ENCODE measurements at regions of chr1 and their contacts with region 1.

Region 1: DNA sequence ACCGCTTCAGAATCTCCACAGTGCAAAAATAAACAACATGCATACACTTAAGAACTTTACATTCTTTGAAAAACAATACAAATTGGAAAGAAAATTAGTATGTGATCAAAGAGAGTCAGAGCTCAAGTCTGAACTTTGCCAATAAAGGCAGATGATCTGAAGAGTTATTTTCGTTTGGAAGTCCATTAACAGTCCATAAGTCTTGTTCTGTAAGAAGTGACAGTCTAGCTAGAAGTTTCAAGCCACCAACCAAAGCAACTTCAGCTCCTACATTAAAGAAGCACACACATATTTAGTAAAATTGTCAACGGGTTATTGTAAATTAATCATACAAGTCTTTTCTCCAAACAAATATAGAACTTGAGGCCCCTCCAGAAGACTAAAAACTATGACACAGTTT is 20.7 kb downstream of the ANGEL2 start:
- DNase-seq: no peak
- ATAC-seq: no peak
- H3K4me3 ChIP-seq: no peak overlapping the region
- H3K27ac ChIP-seq: no peak overlapping the region
- H3K4me1 ChIP-seq: no peaks in the 10 kb centered on the region
- H3K27me3 ChIP-seq: no peaks in the 10 kb centered on the region
- CTCF ChIP-seq: no peak

Region 2: GRCh38 chr1:211734791-211735190 is 1260.1 kb before region 1 on chr1:
- intact Hi-C with region 1: no loop called
- DNase-seq: no peak
- ATAC-seq: no peak
- H3K4me3 ChIP-seq: no peak overlapping the region
- H3K27ac ChIP-seq: no peak overlapping the region
- H3K4me1 ChIP-seq: no peaks in the 10 kb centered on the region
- H3K27me3 ChIP-seq: no peaks in the 10 kb centered on the region
- CTCF ChIP-seq: no peak

Region 3: GRCh38 chr1:212814537-212815334 is 180.2 kb before region 1 on chr1:
- intact Hi-C with region 1: loop called (anchors 2 to 5 kb)
- DNase-seq: no peak
- ATAC-seq: peak in 1 of 4 donors; percentile 56
- H3K4me3 ChIP-seq: no peak overlapping the region
- H3K27ac ChIP-seq: no peak overlapping the region
- H3K4me1 ChIP-seq: no peaks in the 10 kb centered on the region
- H3K27me3 ChIP-seq: no peaks in the 10 kb centered on the region
- CTCF ChIP-seq: peak; percentile 43

Region 4: GRCh38 chr1:213103377-213104306 is 108.7 kb after region 1 on chr1:
- intact Hi-C with region 1: no loop called
- DNase-seq: no peak
- ATAC-seq: no peak
- H3K4me3 ChIP-seq: no peak overlapping the region
- H3K27ac ChIP-seq: no peak overlapping the region
- H3K4me1 ChIP-seq: no peaks in the 10 kb centered on the region
- H3K27me3 ChIP-seq: no peaks in the 10 kb centered on the region
- CTCF ChIP-seq: no peak

Region 5: GRCh38 chr1:213399695-213400094 is 404.8 kb after region 1 on chr1:
- intact Hi-C with region 1: no loop called
- DNase-seq: no peak
- ATAC-seq: peak; percentile 79 to 94 (median 88)
- H3K4me3 ChIP-seq: no peak overlapping the region
- H3K27ac ChIP-seq: no peak overlapping the region
- H3K4me1 ChIP-seq: no peaks in the 10 kb centered on the region
- H3K27me3 ChIP-seq: no peaks in the 10 kb centered on the region
- CTCF ChIP-seq: no peak

Measured in psoas muscle (tissue), 8 donors.